ENCODE measurements at regions of chr10 and their contacts with region 1.

Region 1: GRCh38 chr10:100637785-100638184 is 102.0 kb downstream of the HIF1AN start:
- DNase-seq: no peak
- H3K4me3 ChIP-seq: no peak overlapping the region
- H3K27ac ChIP-seq: no peak overlapping the region
- H3K4me1 ChIP-seq: no peaks in the 10 kb centered on the region
- H3K27me3 ChIP-seq: peaks cover 16% of the 10 kb centered on the region
- CTCF ChIP-seq: peak; percentile 55

Region 2: GRCh38 chr10:99633824-99634223 is 1004.0 kb before region 1 on chr10:
- CTCF ChIA-PET with region 1: no interaction called
- POLR2A ChIA-PET with region 1: no interaction called
- intact Hi-C with region 1: no loop called
- DNase-seq: no peak
- H3K4me3 ChIP-seq: no peak overlapping the region
- H3K27ac ChIP-seq: no peak overlapping the region
- H3K4me1 ChIP-seq: peaks cover 3% of the 10 kb centered on the region
- H3K27me3 ChIP-seq: peaks cover 4% of the 10 kb centered on the region
- CTCF ChIP-seq: no peak

Region 3: GRCh38 chr10:100653957-100654781 is 16.4 kb after region 1 on chr10:
- CTCF ChIA-PET with region 1: no interaction called
- POLR2A ChIA-PET with region 1: interaction called, 10 read pairs
- intact Hi-C with region 1: no loop called
- DNase-seq: peak; percentile 71
- H3K4me3 ChIP-seq: peak overlapping the region; percentile 47
- H3K27ac ChIP-seq: peak overlapping the region; percentile 50
- H3K4me1 ChIP-seq: peaks cover 23% of the 10 kb centered on the region
- H3K27me3 ChIP-seq: peaks cover 63% of the 10 kb centered on the region
- CTCF ChIP-seq: no peak

Measured in A673 (cell line).